Caco-2 (cell line): ENCODE measurements at regions of chr15 and their contacts with region 1.

Region 1: GRCh38 chr15:38817427-38818156 is 253.0 kb upstream of the RASGRP1 start:
- DNase-seq: peak; percentile 84 to 93
- H3K4me3 ChIP-seq: no peak overlapping the region
- H3K4me3 Mint-ChIP-seq: no peak overlapping the region
- H3K27ac Mint-ChIP-seq: no peak overlapping the region
- H3K4me1 ChIP-seq: no peaks in the 10 kb centered on the region
- H3K4me1 Mint-ChIP-seq: no peaks in the 10 kb centered on the region
- H3K27me3 ChIP-seq: no peaks in the 10 kb centered on the region
- H3K27me3 Mint-ChIP-seq: peaks cover 4% of the 10 kb centered on the region
- CTCF ChIP-seq: peak; percentile 99

Region 2: GRCh38 chr15:38496151-38496550 is 321.4 kb before region 1 on chr15:
- CTCF ChIA-PET with region 1: no interaction called
- POLR2A ChIA-PET with region 1: no interaction called
- intact Hi-C with region 1: no loop called
- DNase-seq: no peak
- H3K4me3 ChIP-seq: no peak overlapping the region
- H3K4me3 Mint-ChIP-seq: no peak overlapping the region
- H3K27ac Mint-ChIP-seq: no peak overlapping the region
- H3K4me1 ChIP-seq: no peaks in the 10 kb centered on the region
- H3K4me1 Mint-ChIP-seq: no peaks in the 10 kb centered on the region
- H3K27me3 ChIP-seq: no peaks in the 10 kb centered on the region
- H3K27me3 Mint-ChIP-seq: no peaks in the 10 kb centered on the region
- CTCF ChIP-seq: no peak

Region 3: DNA sequence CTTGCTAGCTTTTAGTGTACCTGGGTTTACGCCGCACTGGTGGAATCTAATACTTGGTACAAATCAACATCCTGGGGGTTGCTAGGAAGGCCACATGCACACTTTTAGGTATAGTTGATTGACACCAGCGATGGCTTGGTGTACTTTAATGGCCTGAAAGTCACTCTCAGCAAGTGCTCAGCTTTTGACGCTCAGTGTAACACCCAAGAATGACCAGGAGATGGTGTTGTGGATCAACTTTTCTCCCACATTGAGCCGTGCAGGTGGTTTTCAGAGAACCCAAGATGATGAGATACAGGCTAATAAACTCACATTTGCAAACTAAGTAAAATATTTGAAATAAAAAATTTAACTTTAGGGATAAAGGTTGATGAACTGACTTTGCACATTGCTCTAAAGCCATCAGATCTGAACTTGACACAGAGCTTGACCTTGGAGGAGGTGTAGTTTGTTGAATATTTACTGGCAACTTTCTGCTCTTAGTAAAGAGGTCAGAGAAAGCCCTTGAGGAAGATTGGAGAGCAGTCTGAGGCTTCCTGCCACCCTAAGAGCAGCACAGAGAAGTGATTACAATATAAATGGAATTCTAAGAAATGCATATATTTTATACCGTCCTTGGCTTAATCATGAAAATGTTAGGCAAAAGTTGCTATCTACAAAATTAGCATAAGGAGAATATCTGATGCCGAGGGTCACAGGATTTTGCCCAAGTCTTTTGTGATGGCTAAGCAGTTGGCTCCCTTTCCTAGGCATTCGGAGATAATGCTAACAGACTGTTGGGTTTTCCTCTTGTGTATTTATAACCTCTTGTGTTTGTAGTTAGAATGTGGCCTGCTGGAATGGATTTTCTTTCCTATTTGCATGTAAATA is 109.6 kb before region 1 on chr15:
- CTCF ChIA-PET with region 1: interaction called, 3 read pairs
- POLR2A ChIA-PET with region 1: no interaction called
- intact Hi-C with region 1: loop called (anchors 2 kb)
- DNase-seq: peak in 1 of 2 experiments; percentile 62
- H3K4me3 ChIP-seq: no peak overlapping the region
- H3K4me3 Mint-ChIP-seq: no peak overlapping the region
- H3K27ac Mint-ChIP-seq: no peak overlapping the region
- H3K4me1 ChIP-seq: peaks cover 1% of the 10 kb centered on the region; the same call in 1 of the 2 replicates
- H3K4me1 Mint-ChIP-seq: no peaks in the 10 kb centered on the region
- H3K27me3 ChIP-seq: no peaks in the 10 kb centered on the region
- H3K27me3 Mint-ChIP-seq: no peaks in the 10 kb centered on the region
- CTCF ChIP-seq: peak; percentile 68 to 70

Region 4: DNA sequence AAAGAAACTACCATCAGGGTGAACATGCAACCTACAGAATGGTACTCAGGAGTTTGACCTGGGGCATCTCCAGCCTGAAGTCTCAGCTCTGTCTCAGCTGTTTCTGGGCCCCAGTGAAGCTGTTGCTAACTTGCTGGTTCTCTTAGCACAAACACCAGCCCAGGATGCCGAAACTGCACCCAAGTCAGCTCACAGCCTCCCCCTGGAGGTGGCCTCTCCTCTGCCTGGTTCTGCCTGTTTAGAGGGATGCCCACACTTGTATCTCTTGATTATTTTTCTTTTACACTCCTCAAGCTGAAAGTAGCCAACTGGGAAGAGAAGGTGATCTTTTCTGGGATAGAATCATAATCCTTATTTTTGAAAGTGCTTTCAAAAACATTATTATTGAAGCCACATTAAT is 36.0 kb after region 1 on chr15:
- CTCF ChIA-PET with region 1: no interaction called
- POLR2A ChIA-PET with region 1: no interaction called
- intact Hi-C with region 1: loop called (anchors 1 kb)
- DNase-seq: peak; percentile 51 to 65
- H3K4me3 ChIP-seq: no peak overlapping the region
- H3K4me3 Mint-ChIP-seq: no peak overlapping the region
- H3K27ac Mint-ChIP-seq: no peak overlapping the region
- H3K4me1 ChIP-seq: no peaks in the 10 kb centered on the region
- H3K4me1 Mint-ChIP-seq: no peaks in the 10 kb centered on the region
- H3K27me3 ChIP-seq: no peaks in the 10 kb centered on the region
- H3K27me3 Mint-ChIP-seq: no peaks in the 10 kb centered on the region
- CTCF ChIP-seq: peak; percentile 43 to 66

Region 5: DNA sequence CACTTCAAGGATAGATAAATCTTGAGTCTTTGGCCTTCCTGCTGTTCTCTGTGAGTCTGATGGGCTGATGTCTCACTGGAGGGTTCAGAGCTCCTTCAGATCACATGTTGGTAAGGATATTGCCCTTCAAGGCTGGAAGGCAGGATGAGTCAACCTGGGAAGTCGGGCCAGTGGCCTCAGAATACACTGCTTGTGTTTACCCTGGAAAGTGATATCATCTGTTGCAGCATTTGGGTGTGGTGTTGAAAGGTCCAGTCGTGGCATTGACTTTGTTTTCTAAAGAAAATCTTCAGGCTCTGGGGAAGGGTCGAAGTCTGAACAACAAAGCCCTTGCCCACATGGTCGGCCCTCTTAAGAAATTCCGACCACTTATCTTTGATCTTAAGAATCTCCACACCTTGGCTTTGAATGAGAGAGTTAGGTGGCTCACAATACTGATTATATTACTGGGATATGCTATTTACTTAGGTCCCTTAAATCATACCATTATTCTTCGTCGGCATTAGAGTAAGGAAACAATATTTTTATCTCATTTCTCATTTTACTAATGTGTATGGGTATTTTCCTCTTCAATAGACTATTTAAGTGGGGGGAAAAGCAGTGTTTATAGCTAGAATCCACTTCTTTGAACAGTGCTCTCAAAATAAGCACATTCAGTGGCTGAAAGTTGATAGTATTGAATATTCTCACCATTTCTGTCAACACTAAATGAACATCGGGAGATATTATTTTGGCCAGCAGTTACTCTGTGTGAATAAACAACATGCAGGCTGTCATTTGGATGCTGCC is 50.9 kb after region 1 on chr15:
- CTCF ChIA-PET with region 1: interaction called, 4 read pairs
- POLR2A ChIA-PET with region 1: no interaction called
- intact Hi-C with region 1: loop called (anchors 1 kb)
- DNase-seq: peak; percentile 71 to 79
- H3K4me3 ChIP-seq: no peak overlapping the region
- H3K4me3 Mint-ChIP-seq: no peak overlapping the region
- H3K27ac Mint-ChIP-seq: no peak overlapping the region
- H3K4me1 ChIP-seq: peaks cover 29% of the 10 kb centered on the region
- H3K4me1 Mint-ChIP-seq: peaks cover 13% of the 10 kb centered on the region
- H3K27me3 ChIP-seq: no peaks in the 10 kb centered on the region
- H3K27me3 Mint-ChIP-seq: no peaks in the 10 kb centered on the region
- CTCF ChIP-seq: no peak

Region 6: DNA sequence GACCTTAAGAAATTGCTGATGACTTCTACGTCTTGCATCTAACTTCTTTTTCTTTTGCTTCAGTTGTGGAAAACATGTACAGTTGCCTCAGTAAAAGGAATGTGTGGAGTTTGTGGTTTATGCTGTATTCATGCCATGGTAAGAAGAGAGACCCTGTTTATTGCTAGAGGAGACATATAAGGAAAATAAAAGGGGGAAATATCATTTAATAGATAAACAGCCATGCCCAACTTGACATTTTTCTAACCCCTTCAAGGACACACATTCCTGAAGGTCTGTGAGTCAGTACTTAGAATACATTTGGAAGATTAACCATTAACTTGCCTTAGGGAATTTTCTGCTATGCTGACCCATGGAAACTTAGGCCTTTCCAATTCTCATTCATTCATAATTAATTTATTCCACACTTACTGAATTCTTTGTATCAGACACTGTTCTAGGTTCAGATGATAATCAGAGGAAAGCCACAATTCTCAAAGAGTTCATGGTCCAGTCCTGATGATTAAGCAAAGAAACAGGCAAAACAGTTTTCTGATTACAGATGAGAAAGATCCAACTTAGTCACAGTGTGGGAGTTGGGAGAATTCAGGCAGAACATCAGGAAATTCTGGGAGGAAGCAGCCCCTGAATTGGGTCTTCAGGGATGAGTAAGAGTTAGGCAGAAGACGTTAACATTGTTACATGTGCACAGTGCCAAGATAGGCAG is 76.8 kb after region 1 on chr15:
- CTCF ChIA-PET with region 1: no interaction called
- POLR2A ChIA-PET with region 1: no interaction called
- intact Hi-C with region 1: loop called (anchors 2 kb)
- DNase-seq: no peak
- H3K4me3 ChIP-seq: no peak overlapping the region
- H3K4me3 Mint-ChIP-seq: no peak overlapping the region
- H3K27ac Mint-ChIP-seq: peak overlapping the region; percentile 2
- H3K4me1 ChIP-seq: peaks cover 10% of the 10 kb centered on the region; the same call in 1 of the 2 replicates
- H3K4me1 Mint-ChIP-seq: peaks cover 18% of the 10 kb centered on the region
- H3K27me3 ChIP-seq: no peaks in the 10 kb centered on the region
- H3K27me3 Mint-ChIP-seq: no peaks in the 10 kb centered on the region
- CTCF ChIP-seq: no peak

Region 7: GRCh38 chr15:38991126-38991525 is 173.5 kb after region 1 on chr15:
- CTCF ChIA-PET with region 1: interaction called, 3 read pairs
- POLR2A ChIA-PET with region 1: no interaction called
- intact Hi-C with region 1: loop called (anchors 1 kb)
- DNase-seq: peak in 1 of 2 experiments; percentile 29
- H3K4me3 ChIP-seq: no peak overlapping the region
- H3K4me3 Mint-ChIP-seq: no peak overlapping the region
- H3K27ac Mint-ChIP-seq: no peak overlapping the region
- H3K4me1 ChIP-seq: no peaks in the 10 kb centered on the region
- H3K4me1 Mint-ChIP-seq: peaks cover 6% of the 10 kb centered on the region
- H3K27me3 ChIP-seq: no peaks in the 10 kb centered on the region
- H3K27me3 Mint-ChIP-seq: no peaks in the 10 kb centered on the region
- CTCF ChIP-seq: peak; percentile 16 to 40

Region 8: GRCh38 chr15:39154227-39154638 is 336.6 kb after region 1 on chr15:
- CTCF ChIA-PET with region 1: no interaction called
- POLR2A ChIA-PET with region 1: no interaction called
- intact Hi-C with region 1: loop called (anchors 10 kb)
- DNase-seq: peak in 1 of 2 experiments; percentile 39
- H3K4me3 ChIP-seq: no peak overlapping the region
- H3K4me3 Mint-ChIP-seq: no peak overlapping the region
- H3K27ac Mint-ChIP-seq: peak overlapping the region; percentile 46
- H3K4me1 ChIP-seq: peaks cover 20% of the 10 kb centered on the region
- H3K4me1 Mint-ChIP-seq: peaks cover 6% of the 10 kb centered on the region
- H3K27me3 ChIP-seq: no peaks in the 10 kb centered on the region
- H3K27me3 Mint-ChIP-seq: no peaks in the 10 kb centered on the region
- CTCF ChIP-seq: peak; percentile 34 to 38